Calu3 (cell line): ENCODE measurements at regions of chr1 and their contacts with region 1.

Region 1: DNA sequence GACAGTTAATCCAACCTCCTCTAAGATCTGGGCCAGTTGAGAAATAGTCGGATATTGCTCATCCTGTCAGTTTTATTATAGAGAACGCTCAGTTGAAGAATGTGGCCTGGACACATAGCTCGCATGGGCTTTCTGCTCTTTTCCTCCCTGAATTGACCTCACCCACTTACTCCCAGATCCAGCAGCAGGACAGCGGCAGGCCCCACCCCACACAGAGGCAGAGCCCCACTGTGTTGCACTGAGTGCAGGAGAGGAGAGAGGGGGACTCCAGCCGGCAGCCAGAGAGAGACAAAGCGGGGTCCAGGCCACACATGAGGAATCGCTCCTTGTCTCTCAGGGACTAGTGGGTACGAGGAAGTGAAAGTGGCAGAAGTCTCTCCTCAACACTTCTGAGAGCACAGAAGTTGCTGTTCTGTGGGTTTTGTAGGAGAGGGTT is 78.6 kb downstream of the LAMC1 start:
- DNase-seq: no peak
- H3K4me3 Mint-ChIP-seq: no peak overlapping the region
- H3K27ac Mint-ChIP-seq: no peak overlapping the region
- H3K4me1 Mint-ChIP-seq: no peaks in the 10 kb centered on the region
- H3K27me3 Mint-ChIP-seq: no peaks in the 10 kb centered on the region
- CTCF ChIP-seq: no peak

Region 2: DNA sequence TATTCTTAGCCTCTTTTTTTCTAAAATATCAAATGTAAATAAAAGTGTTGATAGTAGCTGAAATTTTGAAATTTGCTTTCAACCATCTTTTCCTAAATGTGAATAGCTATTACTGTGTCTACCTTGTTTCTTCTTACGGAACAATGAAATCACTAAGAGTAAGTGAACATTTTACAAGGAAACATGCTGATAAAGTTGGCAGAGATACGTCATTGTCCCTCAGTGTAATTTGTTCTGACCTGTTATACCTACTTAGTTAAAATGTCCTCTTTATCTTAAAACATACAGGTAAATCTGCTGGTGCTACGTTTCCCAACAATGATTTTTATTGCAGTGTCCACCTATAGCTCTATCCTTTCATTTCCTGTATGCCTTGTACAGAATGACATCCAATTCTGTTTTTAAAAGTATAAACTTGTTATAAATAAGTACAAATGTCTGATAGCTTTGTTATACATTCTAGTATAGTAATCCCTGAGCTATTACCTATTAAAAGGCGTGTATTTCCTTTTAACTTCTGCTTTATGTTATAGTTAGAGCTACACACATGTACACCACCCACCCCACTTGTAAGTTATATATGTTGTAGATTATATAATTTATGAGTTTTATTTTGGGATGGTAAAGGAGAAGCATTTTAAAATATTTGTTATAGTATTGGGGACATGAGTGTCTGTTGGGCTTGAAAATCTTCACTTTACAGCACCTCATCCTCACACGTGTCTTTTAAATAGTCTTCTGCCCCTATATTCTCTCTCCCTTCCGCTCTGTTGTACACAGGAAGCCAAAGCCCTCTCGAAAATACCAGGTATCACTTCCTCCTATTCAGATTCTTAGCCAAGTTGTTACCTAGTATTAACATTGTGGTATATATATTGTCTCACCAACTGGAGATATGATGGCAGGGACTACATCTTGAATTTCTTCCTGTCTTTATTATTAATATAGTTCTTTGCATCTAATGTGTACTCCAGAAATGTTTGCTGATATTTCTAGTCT is 53.5 kb before region 1 on chr1:
- CTCF ChIA-PET with region 1: no interaction called
- intact Hi-C with region 1: loop called (anchors 5 kb)
- DNase-seq: no peak
- H3K4me3 Mint-ChIP-seq: no peak overlapping the region
- H3K27ac Mint-ChIP-seq: no peak overlapping the region
- H3K4me1 Mint-ChIP-seq: peaks cover 87% of the 10 kb centered on the region
- H3K27me3 Mint-ChIP-seq: no peaks in the 10 kb centered on the region
- CTCF ChIP-seq: no peak

Region 3: GRCh38 chr1:183404456-183404855 is 302.6 kb after region 1 on chr1:
- CTCF ChIA-PET with region 1: no interaction called
- intact Hi-C with region 1: no loop called
- DNase-seq: no peak
- H3K4me3 Mint-ChIP-seq: no peak overlapping the region
- H3K27ac Mint-ChIP-seq: no peak overlapping the region
- H3K4me1 Mint-ChIP-seq: no peaks in the 10 kb centered on the region
- H3K27me3 Mint-ChIP-seq: peaks cover 52% of the 10 kb centered on the region
- CTCF ChIP-seq: no peak